IMR-90 (cell line): ENCODE measurements at regions of chr7 and their contacts with region 1.

Region 1: DNA sequence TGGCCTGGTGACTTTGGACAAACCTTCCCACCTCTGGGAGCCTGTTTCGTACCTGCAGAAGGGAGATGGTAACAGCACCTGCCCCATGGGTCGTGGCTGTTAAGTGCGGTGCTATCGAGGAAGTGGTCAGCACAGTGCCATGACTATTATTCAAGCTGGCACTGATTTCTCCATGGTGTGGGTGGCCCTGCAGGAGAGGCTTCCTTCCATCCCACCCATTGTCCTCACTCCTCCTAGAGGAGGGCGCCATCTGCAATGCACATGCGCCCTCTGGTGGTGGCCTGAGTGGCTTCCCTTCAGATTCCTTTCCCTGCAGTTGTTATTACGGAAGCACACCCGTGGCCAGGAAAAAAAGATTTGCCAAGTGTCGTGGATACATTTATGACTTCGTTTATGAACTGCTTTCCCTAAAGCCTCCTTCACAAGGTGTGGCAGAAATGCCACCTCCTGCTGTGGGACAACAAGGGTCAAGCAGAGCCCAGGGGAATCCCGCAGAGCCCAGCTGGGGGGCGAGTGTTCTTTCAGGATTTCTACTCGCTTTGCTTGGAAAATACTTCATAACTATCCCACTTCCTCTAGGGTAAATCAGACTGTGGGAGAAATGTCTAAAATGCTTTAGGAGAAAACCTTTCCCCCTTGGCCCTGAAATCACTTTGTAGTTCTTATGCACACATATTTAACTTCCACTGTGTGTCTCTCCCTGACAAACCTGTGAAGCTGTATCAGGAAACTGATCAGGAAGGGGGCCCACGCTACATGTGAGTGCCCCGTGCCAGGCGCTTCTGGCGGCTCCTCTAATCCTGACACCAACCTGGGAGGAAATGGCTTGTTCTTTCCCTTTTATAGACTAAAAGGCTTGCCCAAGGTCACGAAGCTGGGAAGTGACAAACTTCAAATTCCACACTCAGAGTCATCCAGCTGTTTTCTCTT is 98.0 kb upstream of the ANLN start:
- DNase-seq: peak; percentile 83
- ATAC-seq: peak; percentile 97
- H3K4me3 ChIP-seq: 0 out of 2 replicates have a peak overlapping the region, but pooled peaks have one; percentile 4
- H3K27ac ChIP-seq: peak overlapping the region; percentile 87
- H3K4me1 ChIP-seq: peaks cover 11% of the 10 kb centered on the region
- H3K27me3 ChIP-seq: no peaks in the 10 kb centered on the region
- CTCF ChIP-seq: peak; percentile 99
- POLR2A ChIP-seq: peak; percentile 71
- RAD21 ChIP-seq: peak; percentile 100

Region 2: GRCh38 chr7:35985126-35985754 is 306.4 kb before region 1 on chr7:
- CTCF ChIA-PET with region 1: interaction called, 10 read pairs
- POLR2A ChIA-PET with region 1: no interaction called
- dilution Hi-C with region 1: no loop called
- in situ Hi-C with region 1: no loop called
- intact Hi-C with region 1: loop called (anchors 1 kb)
- DNase-seq: peak; percentile 70
- ATAC-seq: peak; percentile 99
- H3K4me3 ChIP-seq: no peak overlapping the region
- H3K27ac ChIP-seq: no peak overlapping the region
- H3K4me1 ChIP-seq: peaks cover 2% of the 10 kb centered on the region; the same call in 1 of the 2 replicates
- H3K27me3 ChIP-seq: peaks cover 11% of the 10 kb centered on the region
- CTCF ChIP-seq: peak; percentile 96
- POLR2A ChIP-seq: peak; percentile 60; the same call in 1 of the 2 replicates
- RAD21 ChIP-seq: peak; percentile 100

Region 3: DNA sequence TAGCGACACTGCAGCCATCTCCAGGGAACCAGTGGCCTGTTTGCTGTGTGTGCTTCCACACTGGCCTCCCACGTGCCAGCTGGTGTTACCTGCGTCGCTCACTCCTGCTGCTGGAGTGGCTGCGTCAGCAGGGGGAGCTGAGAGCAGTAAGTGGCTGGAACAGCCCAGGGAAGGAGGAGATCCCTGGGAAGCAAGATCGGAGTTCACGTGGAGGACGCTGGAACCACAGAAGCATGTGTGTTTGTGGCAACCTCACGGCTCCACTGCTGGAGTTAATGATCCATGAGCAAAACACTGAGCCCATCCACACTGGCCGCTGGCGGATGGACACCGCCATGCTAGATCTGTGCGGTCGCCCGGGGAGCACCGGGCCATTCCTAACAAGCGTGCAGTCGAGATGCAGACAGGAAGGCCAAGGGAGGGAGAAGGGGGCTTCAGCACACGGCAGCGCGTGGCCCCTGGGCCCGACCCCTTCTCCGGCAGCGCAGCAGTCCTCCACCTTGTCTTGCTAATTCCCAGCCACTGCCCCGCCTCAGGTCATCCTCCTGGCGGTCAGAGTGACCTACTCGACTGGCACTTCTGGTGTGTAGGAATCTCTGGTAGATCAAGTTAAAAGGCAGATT is 207.1 kb before region 1 on chr7:
- CTCF ChIA-PET with region 1: no interaction called
- POLR2A ChIA-PET with region 1: no interaction called
- dilution Hi-C with region 1: no loop called
- in situ Hi-C with region 1: no loop called
- intact Hi-C with region 1: loop called (anchors 1 kb)
- DNase-seq: peak; percentile 41
- ATAC-seq: peak; percentile 46; the same call in 1 of the 2 replicates
- H3K4me3 ChIP-seq: no peak overlapping the region
- H3K27ac ChIP-seq: no peak overlapping the region
- H3K4me1 ChIP-seq: no peaks in the 10 kb centered on the region
- H3K27me3 ChIP-seq: peaks cover 19% of the 10 kb centered on the region
- CTCF ChIP-seq: peak; percentile 33
- POLR2A ChIP-seq: no peak
- RAD21 ChIP-seq: peak; percentile 48

Region 4: GRCh38 chr7:36128448-36129047 is 163.1 kb before region 1 on chr7:
- CTCF ChIA-PET with region 1: interaction called, 4 read pairs
- POLR2A ChIA-PET with region 1: no interaction called
- dilution Hi-C with region 1: no loop called
- in situ Hi-C with region 1: no loop called
- intact Hi-C with region 1: loop called (anchors 1 kb)
- DNase-seq: peak; percentile 91
- ATAC-seq: peak; percentile 89
- H3K4me3 ChIP-seq: no peak overlapping the region
- H3K27ac ChIP-seq: 0 out of 2 replicates have a peak overlapping the region, but pooled peaks have one; percentile 19
- H3K4me1 ChIP-seq: peaks cover 4% of the 10 kb centered on the region; the same call in 1 of the 2 replicates
- H3K27me3 ChIP-seq: no peaks in the 10 kb centered on the region
- CTCF ChIP-seq: peak; percentile 66
- POLR2A ChIP-seq: no peak
- RAD21 ChIP-seq: no peak

Region 5: GRCh38 chr7:36152756-36153570 is 138.7 kb before region 1 on chr7 and contains the start of gene EEPD1:
- CTCF ChIA-PET with region 1: interaction called, 3 read pairs
- POLR2A ChIA-PET with region 1: no interaction called
- dilution Hi-C with region 1: no loop called
- in situ Hi-C with region 1: no loop called
- intact Hi-C with region 1: loop called (anchors 2 kb)
- DNase-seq: peak; percentile 99
- ATAC-seq: peak; percentile 96
- H3K4me3 ChIP-seq: peak within 1 kb of the TSS; percentile 60
- H3K27ac ChIP-seq: peak within 1 kb of the TSS; percentile 49
- H3K4me1 ChIP-seq: peaks cover 16% of the 10 kb centered on the region
- H3K27me3 ChIP-seq: no peaks in the 10 kb centered on the region
- CTCF ChIP-seq: no peak
- POLR2A ChIP-seq: no peak
- RAD21 ChIP-seq: no peak
- total RNA-seq, gene EEPD1: 7.3 and 8.1 TPM in 2 replicates

Region 6: DNA sequence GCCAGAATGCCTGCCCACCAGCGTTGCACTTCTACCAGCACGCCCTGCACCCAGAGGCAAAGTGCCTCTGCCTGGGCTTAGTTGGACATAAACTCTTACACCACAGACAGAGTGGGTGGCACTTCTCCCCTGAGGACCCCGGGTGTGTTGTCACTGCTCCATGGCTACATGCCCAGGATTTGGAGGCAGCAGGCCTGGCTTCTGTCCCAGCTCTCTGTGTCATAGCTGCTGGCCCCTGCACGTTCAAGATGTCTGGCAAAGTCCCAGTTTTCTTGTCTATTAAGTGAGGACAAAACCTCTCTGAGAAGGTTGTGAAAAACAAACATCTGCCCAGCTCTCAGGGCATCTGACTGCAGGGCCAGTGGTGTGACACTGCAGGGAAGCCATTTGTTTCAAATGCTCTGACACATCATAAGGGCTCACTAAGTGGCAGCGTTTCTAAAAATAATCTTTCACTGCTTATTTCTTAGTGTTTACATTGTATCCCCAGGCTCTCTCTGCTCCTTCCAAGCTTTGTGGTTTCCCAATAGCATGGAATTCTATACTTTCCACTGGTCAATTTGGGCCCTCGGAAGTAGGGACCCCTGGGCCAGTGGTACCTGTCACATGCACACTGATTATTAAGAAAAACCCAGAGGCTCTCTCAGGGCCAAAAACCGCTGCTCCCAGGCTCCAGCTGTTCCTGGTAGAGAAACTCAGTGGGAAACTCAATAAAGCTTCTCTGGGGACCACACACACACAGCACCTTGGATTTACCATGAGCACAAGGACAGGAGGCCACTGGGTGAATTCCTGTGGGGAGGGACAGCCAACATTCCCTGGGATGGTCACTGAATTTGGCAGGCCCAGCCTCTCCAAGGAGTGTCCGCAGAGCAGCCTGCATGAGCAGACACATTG is 11.8 kb after region 1 on chr7:
- CTCF ChIA-PET with region 1: interaction called, 5 read pairs
- POLR2A ChIA-PET with region 1: no interaction called
- dilution Hi-C with region 1: no loop called
- in situ Hi-C with region 1: no loop called
- intact Hi-C with region 1: loop called (anchors 1 kb)
- DNase-seq: peak; percentile 95
- ATAC-seq: peak; percentile 86
- H3K4me3 ChIP-seq: no peak overlapping the region
- H3K27ac ChIP-seq: peak overlapping the region; percentile 4; the same call in 1 of the 2 replicates
- H3K4me1 ChIP-seq: peaks cover 23% of the 10 kb centered on the region
- H3K27me3 ChIP-seq: no peaks in the 10 kb centered on the region
- CTCF ChIP-seq: no peak
- POLR2A ChIP-seq: no peak
- RAD21 ChIP-seq: no peak

Region 7: DNA sequence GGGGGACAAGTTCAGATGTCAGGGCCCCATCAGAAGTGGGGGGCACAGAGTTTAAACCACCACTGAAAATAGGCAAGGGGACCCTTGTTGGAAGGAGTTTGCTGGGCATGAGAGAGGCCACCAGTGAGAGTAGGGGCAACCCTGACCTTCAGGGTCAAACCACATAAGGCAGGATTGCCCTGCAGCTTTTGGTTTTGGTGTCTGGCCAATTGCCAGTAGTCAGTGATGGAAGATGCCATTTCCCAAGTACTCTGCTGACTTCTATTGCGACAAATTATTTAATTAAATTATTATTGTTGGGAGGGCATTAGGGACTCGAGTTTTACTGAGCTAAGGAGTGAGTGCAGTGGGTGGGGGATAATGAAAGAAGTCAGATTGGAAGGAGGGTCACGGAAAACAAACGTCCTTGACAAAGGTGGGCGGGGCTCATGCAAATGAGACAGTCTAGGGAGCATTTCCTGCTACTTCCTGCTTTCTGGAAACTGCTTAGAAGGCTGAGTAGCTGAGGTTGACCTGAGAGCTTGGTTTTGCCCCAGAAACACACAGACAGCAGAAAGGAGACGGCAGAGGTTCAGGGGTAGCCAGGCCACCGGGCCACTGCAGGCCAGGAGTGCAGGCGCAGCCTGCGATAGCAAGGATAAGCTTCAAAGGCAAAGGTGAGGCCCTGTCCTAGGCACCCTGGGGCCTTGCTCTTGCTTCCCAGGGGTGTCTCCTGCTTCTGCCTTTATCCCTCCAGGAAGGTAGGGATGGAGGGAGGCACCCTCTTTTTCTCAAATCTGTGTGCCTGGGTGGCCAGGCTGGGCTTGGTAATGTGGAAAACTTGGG is 23.9 kb after region 1 on chr7:
- CTCF ChIA-PET with region 1: interaction called, 9 read pairs
- POLR2A ChIA-PET with region 1: no interaction called
- dilution Hi-C with region 1: no loop called
- in situ Hi-C with region 1: no loop called
- intact Hi-C with region 1: loop called (anchors 1 kb)
- DNase-seq: no peak
- ATAC-seq: no peak
- H3K4me3 ChIP-seq: no peak overlapping the region
- H3K27ac ChIP-seq: no peak overlapping the region
- H3K4me1 ChIP-seq: no peaks in the 10 kb centered on the region
- H3K27me3 ChIP-seq: peaks cover 9% of the 10 kb centered on the region
- CTCF ChIP-seq: no peak
- POLR2A ChIP-seq: no peak
- RAD21 ChIP-seq: no peak